ENCODE measurements at regions of chr18 and their contacts with region 1.

Region 1: DNA sequence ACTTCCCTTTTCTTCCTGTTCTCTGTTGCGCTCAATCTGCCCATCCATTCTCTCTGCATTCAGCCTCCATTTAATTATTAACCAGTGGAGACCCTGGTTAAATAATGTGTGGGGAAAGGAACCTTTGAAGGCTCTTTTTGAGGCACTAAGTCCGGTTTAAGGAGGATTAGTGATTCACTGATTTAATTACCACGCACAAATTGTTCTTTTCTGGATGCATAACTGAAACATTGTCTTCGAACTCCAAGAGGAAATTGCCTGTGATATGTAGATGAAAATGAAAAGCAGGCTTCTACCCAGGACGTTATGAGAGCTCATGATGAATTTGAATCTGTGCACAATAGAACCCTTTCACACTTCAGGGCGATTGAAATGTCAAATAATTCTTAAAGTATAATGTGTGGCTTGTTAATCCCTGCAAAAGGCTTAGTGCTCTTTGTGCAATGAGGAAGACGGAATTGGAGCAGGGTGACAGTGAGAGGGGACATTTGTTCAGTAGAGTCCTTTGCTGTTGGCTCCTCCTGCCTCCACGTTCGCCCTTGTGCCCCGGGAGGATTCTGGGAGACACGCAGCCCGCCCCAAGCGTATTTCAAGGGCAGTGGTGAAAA is 51.1 kb upstream of the ZNF236 start:
- DNase-seq: no peak
- H3K4me3 ChIP-seq: no peak overlapping the region
- H3K27ac ChIP-seq: no peak overlapping the region
- H3K4me1 ChIP-seq: no peaks in the 10 kb centered on the region
- H3K27me3 ChIP-seq: peaks cover 0 to 7% of the 10 kb centered on the region in 2 donors
- CTCF ChIP-seq: no peak
- POLR2A ChIP-seq: no peak

Region 2: DNA sequence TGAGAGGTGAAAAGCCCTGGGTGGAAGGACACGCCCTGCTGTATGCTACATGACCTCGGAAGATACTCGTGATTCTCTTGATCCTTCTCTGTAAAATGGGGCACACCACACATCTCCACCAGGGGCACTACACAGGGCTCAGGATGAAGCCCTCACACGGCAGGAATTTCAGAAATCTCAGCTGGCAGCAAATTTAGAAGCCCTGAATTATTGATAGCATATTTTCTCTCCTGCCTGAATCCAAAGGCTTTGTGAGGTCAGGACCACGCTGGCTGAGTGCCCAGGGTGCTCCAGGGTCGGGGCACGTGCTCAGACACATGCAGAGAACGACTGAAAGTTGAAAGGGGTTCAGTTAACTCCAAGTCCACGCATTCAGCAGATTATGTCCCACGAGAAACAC is 436.2 kb after region 1 on chr18:
- intact Hi-C with region 1: no loop called
- DNase-seq: peak in 1 of 2 donors; percentile 54
- H3K4me3 ChIP-seq: peak overlapping the region in 1 of 3 donors; percentile 6
- H3K27ac ChIP-seq: peak overlapping the region; percentile 48 to 83
- H3K4me1 ChIP-seq: no peaks in the 10 kb centered on the region
- H3K27me3 ChIP-seq: no peaks in the 10 kb centered on the region
- CTCF ChIP-seq: peak; percentile 14 to 69 (median 39)
- POLR2A ChIP-seq: no peak

Region 3: DNA sequence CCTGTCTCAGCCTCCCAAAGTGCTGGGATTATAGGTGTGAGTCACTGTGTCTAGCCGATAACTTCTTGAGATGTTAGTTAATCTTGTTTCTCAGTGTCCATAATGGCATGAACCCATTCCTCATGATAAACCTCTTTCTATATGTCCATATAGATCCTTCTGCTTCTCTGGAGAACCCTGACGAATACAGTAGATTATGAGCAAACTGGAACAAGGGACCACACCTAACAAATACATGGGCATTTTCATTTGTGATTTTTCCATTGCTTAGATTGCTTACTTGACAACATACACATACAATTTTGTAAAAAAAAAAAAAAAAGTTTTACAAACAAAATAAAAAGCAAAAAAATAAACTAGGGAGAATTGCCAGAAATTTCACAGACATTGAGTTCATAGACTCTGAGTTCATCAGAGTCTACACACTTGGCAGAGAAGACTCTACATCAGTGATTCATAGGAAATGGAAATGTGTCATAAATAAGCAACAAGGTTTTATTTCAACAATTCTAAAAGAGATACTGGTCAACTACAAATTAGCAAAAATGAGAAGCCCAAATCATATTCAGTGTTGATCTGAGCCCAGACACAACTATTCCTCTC is 575.0 kb after region 1 on chr18:
- intact Hi-C with region 1: loop called (anchors 5 kb)
- DNase-seq: no peak
- H3K4me3 ChIP-seq: no peak overlapping the region
- H3K27ac ChIP-seq: no peak overlapping the region
- H3K4me1 ChIP-seq: no peaks in the 10 kb centered on the region
- H3K27me3 ChIP-seq: no peaks in the 10 kb centered on the region
- CTCF ChIP-seq: no peak
- POLR2A ChIP-seq: no peak

Measured in breast epithelium (tissue), 4 donors.